Endothelial cell of umbilical vein (primary cell): ENCODE measurements at regions of chr5 and their contacts with region 1.

Region 1: DNA sequence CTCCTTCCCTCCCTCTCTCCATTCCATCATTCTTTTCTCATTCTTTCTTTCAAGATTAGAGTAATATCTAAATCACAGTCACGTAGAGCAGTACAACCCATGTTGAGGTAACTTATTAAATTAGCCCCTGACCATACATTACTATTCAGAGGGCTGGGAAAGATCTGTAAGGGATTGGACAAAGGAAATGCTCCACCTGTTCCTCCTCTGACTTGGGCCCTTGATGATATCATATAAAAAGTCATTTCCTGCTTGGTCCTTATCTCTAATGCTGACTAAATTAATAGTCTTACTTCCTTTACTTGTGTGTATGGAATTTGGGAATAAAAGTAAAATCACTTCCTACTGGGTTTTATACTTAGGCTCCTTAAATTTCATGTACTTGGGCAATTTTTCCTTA is 40.8 kb downstream of the SNX18 start:
- DNase-seq: peak; percentile 76
- H3K4me3 ChIP-seq: peak overlapping the region in 1 of 3 experiments; percentile 5
- H3K27ac ChIP-seq: peak overlapping the region; percentile 58
- H3K4me1 ChIP-seq: peaks cover 41% of the 10 kb centered on the region
- H3K27me3 ChIP-seq: no peaks in the 10 kb centered on the region
- CTCF ChIP-seq: no peak
- POLR2A ChIP-seq: no peak

Region 2: GRCh38 chr5:54537725-54538124 is 20.6 kb before region 1 on chr5:
- CTCF ChIA-PET with region 1: interaction called, 6 read pairs
- POLR2A ChIA-PET with region 1: no interaction called
- dilution Hi-C with region 1: no loop called
- intact Hi-C with region 1: loop called (anchors 2 kb)
- DNase-seq: no peak
- H3K4me3 ChIP-seq: peak overlapping the region in 1 of 3 experiments; percentile 16
- H3K27ac ChIP-seq: no peak overlapping the region
- H3K4me1 ChIP-seq: peaks cover 24% of the 10 kb centered on the region
- H3K27me3 ChIP-seq: no peaks in the 10 kb centered on the region
- CTCF ChIP-seq: no peak
- POLR2A ChIP-seq: no peak

Region 3: GRCh38 chr5:54646356-54647101 is 88.2 kb after region 1 on chr5:
- CTCF ChIA-PET with region 1: interaction called, 3 read pairs
- POLR2A ChIA-PET with region 1: no interaction called
- dilution Hi-C with region 1: no loop called
- intact Hi-C with region 1: loop called (anchors 5 kb)
- DNase-seq: peak; percentile 73
- H3K4me3 ChIP-seq: no peak overlapping the region
- H3K27ac ChIP-seq: no peak overlapping the region
- H3K4me1 ChIP-seq: peaks cover 23% of the 10 kb centered on the region
- H3K27me3 ChIP-seq: no peaks in the 10 kb centered on the region
- CTCF ChIP-seq: no peak
- POLR2A ChIP-seq: no peak

Region 4: DNA sequence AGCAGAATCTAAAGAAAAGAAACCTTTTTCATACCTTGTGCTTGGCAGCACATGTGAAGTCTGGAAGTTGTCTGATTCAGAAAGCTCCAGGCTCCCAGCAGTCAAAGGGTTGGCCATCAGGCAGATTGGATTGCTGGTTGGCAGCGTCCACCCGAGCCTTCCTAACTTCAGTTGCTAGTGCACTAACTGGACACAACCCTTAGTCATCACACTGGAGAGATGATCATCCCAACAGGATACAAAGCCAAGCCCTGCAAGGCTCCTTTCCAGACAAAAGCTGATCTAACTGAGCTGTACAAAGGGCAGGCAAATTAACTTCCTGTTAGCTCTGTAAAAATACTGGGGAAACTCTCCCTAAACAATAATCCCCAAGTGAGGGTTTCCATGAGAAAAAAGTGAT is 144.8 kb after region 1 on chr5:
- CTCF ChIA-PET with region 1: no interaction called
- POLR2A ChIA-PET with region 1: no interaction called
- dilution Hi-C with region 1: no loop called
- intact Hi-C with region 1: loop called (anchors 5 kb)
- DNase-seq: peak; percentile 67
- H3K4me3 ChIP-seq: no peak overlapping the region
- H3K27ac ChIP-seq: no peak overlapping the region
- H3K4me1 ChIP-seq: peaks cover 18% of the 10 kb centered on the region
- H3K27me3 ChIP-seq: no peaks in the 10 kb centered on the region
- CTCF ChIP-seq: no peak
- POLR2A ChIP-seq: no peak